ENCODE measurements at regions of chr10 and their contacts with region 1.

Region 1: GRCh38 chr10:102713814-102714620 is at the start of gene ARL3:
- DNase-seq: peak; percentile 99
- H3K4me3 ChIP-seq: peak within 1 kb of the TSS; percentile 64 to 85 (median 85)
- H3K27ac ChIP-seq: peak within 1 kb of the TSS; percentile 38
- H3K4me1 ChIP-seq: peaks cover 23% of the 10 kb centered on the region
- H3K27me3 ChIP-seq: no peaks in the 10 kb centered on the region
- CTCF ChIP-seq: peak; percentile 39 to 78
- POLR2A ChIP-seq: peak; percentile 76
- total RNA-seq, gene ARL3: 10.6 and 11.0 TPM in 2 replicates

Region 2: DNA sequence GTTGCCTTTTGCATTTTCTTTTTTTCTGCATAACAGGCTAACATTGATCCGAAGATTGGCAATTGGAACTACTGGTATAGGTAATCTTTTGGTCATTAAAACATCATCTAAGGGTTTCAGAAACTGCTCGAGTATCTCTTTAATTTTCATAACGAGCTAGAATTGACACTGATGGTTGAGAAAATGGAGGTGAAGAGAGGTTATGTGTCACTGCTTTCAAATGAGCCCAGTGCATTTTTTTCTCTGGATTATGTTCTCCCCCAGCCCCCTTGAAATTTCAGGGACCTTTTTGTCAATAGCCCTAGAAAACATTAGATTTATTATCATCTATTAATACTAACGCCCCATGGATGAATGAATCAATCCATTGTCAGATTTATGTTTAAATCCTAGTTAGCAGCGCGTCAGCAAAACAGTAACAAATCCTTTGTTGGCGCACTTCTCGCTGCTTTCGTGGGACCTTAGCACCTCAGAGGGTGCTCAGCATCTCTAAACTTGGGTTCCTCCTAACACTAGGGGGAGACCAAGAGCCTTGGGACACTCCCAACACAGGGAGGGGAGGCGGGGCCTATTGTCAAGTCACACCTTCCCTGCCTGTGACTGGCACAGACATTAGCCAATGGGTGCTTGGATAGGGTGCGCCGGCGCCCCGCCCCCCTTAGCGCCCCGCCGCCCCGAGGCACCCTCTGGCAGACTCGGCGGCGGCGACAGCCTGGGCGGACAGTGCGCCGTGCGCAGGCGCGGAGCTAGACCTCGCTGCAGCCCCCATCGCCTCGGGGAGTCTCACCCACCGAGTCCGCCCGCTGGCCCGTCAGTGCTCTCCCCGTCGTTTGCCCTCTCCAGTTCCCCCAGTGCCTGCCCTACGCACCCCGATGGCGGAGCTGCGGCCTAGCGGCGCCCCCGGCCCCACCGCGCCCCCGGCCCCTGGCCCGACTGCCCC is 210.5 kb before region 1 on chr10 and contains the start of gene SUFU:
- CTCF ChIA-PET with region 1: interaction called, 6 read pairs
- POLR2A ChIA-PET with region 1: no interaction called
- dilution Hi-C with region 1: no loop called
- intact Hi-C with region 1: loop called (anchors 1 kb)
- DNase-seq: peak; percentile 99
- H3K4me3 ChIP-seq: peak within 1 kb of the TSS; percentile 68 to 87 (median 76)
- H3K27ac ChIP-seq: peak within 1 kb of the TSS; percentile 52
- H3K4me1 ChIP-seq: peaks cover 16% of the 10 kb centered on the region
- H3K27me3 ChIP-seq: no peaks in the 10 kb centered on the region
- CTCF ChIP-seq: peak; percentile 89 to 91
- POLR2A ChIP-seq: peak; percentile 86
- total RNA-seq, gene SUFU: 14.5 and 16.3 TPM in 2 replicates

Region 3: DNA sequence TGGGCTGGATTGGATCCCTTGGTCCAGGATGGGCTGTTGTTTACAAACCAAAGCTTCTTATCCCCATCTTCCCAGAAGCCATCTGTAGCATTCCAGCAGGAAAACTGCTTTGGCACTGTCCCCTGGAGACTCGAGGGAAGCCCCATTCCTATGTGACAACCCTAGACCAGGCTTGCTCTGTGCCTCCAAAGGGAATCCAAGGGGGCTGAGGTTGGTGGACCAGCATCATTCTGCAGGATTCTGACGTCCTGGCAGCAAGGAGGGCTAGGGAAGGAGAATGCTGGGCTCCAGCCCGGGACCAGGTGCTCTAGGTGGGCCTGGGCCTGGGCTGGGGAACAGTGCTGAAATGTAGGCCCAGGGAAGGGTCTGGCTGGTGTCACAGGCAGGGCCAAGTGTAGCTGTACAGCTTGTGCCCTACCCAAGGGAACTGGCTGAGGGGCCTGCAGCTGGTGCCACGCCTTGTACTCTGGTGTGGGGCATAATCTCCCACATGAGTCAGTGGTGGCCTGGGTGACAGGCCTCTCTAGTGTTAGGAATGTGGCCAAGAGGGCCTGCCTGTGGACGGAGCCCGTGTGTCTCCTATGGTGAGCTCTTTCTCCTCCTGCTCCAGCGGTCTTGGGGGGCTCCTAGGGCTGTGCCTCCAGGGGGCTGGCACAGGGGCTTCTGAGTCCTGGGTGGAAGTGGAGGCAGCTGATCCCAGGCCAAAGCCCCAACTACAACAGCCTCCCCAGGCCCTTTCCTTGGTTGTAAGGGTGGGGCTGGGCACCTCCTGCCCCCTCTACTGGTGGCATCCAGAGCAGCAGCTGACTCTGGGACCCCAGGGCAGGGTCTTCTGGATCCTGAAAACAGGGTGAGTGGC is 44.6 kb before region 1 on chr10:
- CTCF ChIA-PET with region 1: interaction called, 75 read pairs
- POLR2A ChIA-PET with region 1: no interaction called
- dilution Hi-C with region 1: no loop called
- intact Hi-C with region 1: no loop called
- DNase-seq: no peak
- H3K4me3 ChIP-seq: no peak overlapping the region
- H3K27ac ChIP-seq: no peak overlapping the region
- H3K4me1 ChIP-seq: peaks cover 5% of the 10 kb centered on the region
- H3K27me3 ChIP-seq: no peaks in the 10 kb centered on the region
- CTCF ChIP-seq: peak; percentile 17 to 51
- POLR2A ChIP-seq: no peak